ENCODE measurements at regions of chr9 and their contacts with region 1.

Region 1: DNA sequence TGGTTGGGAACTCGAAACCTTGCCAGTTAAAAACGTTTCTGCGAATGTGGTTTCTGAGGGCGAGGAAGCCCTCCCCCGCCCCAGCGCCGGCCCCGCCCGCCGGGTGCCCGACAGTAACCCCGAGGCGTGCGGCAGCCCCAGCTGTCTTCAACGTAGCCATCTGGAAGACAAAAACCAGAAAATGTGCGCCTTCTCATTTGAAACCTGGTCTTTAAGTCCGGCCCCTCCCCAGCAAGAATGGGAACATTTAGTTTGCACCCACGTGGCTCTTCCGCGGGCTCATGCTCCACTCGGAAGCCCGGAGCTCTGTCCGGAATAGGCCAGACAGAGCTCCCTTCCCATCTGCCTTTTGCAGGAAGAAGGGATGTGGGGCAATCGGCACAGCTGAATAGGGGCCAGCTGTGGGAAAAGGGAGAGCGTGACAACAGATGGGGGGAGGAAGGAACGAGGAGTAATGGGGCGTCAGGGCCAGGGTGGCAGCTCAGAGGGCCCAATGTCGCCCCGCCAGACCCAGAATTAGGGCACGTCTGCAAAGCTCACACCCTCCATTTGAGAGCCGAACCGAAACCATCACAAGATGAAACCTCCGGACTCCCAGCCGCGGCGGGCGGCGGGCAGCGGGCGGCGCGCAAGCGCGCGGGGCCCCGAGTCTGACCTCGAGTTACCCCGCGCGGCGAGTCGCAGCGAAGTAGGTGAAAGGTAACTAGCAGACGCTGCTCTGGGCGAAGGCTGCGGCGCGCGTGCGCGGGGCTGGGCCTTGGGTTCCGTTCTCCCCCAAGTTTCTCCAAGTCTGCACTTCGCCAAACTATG is 63.4 kb upstream of the ABCA1 start:
- DNase-seq: peak; percentile 79 to 92 (median 86)
- ATAC-seq: peak; percentile 88
- H3K4me3 ChIP-seq: peak overlapping the region; percentile 80
- H3K4me3 Mint-ChIP-seq: peak overlapping the region; percentile 89 to 94 (median 92)
- H3K27ac ChIP-seq: peak overlapping the region; percentile 92
- H3K27ac Mint-ChIP-seq: peak overlapping the region; percentile 68 to 98 (median 92)
- H3K4me1 ChIP-seq: peaks cover 15 to 32% of the 10 kb centered on the region in 2 donors
- H3K4me1 Mint-ChIP-seq: peaks cover 26 to 45% (median 39%) of the 10 kb centered on the region in 7 donors
- H3K27me3 ChIP-seq: no peaks in the 10 kb centered on the region
- H3K27me3 Mint-ChIP-seq: peaks cover 0 to 63% (median 0%) of the 10 kb centered on the region in 5 donors

Region 2: DNA sequence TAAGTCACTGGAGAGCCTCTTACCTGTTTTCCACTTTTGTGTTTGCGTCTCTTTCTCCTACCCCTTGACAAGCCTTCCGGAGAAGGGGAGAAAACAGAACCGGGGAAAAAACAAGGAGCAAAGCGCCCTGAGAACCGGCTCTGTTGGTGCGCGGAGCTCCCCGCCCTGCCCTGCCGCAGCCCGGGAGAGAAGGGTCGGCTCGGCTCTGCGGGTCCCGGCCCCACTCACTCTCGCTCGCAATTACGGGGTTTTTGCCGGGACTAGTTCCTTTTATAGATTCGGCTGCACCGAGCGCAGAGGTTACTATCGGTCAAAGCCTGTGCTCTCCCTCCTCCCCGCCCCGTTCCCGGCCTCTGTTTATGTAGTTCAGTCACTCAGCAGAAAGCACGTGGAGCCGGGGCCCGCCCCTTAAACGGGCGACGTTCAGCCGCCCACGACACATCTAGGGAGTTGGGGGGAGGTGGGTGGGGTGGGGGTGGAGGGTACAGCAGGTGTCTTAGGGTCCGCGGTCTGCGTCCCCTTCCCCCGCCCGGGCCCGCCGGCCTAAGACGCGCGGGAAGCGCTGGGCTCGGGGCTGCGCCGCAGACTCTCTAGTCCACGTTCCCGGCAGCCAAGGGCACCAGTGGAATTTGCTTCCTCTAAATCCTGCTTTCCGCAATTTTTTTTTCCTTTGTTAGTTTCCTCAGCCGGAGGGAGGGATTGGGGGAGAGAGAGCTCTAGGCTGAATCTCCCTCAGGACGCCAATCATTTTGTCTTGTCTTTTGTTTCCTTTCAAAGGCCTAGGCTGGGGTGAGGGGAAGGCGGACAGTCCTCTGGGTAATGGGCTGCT is 63.2 kb before region 1 on chr9 and contains the start of gene ABCA1:
- CTCF ChIA-PET with region 1: no interaction called
- POLR2A ChIA-PET with region 1: no interaction called
- intact Hi-C with region 1: loop called (anchors 1 kb)
- DNase-seq: peak; percentile 55 to 82 (median 73)
- ATAC-seq: peak; percentile 83
- H3K4me3 ChIP-seq: peak within 1 kb of the TSS; percentile 84
- H3K4me3 Mint-ChIP-seq: peak within 1 kb of the TSS; percentile 88 to 97 (median 96)
- H3K27ac ChIP-seq: peak within 1 kb of the TSS; percentile 70
- H3K27ac Mint-ChIP-seq: peak within 1 kb of the TSS in 8 of 9 donors; percentile 54 to 95 (median 72)
- H3K4me1 ChIP-seq: peaks cover 7 to 9% of the 10 kb centered on the region in 2 donors
- H3K4me1 Mint-ChIP-seq: peaks cover 19 to 41% (median 25%) of the 10 kb centered on the region in 7 donors
- H3K27me3 ChIP-seq: no peaks in the 10 kb centered on the region
- H3K27me3 Mint-ChIP-seq: peaks cover 0 to 51% (median 0%) of the 10 kb centered on the region in 5 donors
- total RNA-seq, gene ABCA1: 0.58 to 19.4 (median 1.1) TPM

Region 3: DNA sequence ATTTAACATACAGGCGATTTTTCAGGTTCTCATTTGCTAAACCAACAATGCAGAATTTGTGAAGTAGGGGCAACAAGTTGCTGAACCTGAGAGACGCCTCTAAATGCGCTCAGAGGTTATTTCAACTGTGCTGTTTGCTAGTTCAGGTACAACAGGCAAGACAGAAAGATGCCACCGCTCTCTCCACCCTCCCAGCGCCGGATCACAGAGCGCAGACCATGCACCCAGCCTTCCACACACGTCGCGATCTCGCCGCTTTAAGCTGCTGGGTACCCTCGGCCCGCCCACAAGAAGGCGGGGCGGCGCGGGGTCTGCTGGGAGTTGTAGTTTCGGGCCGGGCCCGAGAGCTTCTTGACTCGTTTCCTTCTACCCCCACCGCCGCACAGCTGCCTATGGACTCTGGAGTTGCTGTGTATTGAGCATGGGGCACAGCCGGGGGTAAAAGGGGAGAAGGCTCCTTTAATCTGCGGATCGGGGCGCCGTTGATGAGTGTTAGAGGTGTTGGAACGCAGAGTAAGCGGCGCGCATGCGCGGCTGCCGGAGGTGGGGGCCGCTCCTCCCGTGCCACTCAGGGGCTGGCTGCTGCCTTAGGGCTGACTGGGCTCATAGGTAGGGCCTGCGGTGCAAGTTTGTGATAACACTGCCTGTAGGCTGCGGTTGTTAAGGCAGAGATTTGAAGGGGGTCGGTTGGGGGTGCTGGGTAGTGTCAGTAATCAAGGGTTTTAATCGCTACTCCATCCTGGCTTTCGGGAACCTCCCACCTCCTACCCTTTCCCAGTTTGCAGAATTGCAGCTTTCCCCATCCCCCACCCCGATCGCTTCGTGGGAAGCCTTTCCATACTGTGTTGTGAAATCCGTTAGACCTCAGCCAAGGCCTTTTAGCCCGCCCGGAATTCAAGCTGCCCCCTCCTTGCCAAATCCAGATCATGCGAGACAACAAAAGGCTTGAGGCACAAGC is 23.0 kb before region 1 on chr9:
- CTCF ChIA-PET with region 1: interaction called, 3 read pairs
- POLR2A ChIA-PET with region 1: interaction called, 3 read pairs
- intact Hi-C with region 1: loop called (anchors 1 kb)
- DNase-seq: peak; percentile 80 to 95 (median 91)
- ATAC-seq: peak; percentile 99
- H3K4me3 ChIP-seq: peak overlapping the region; percentile 85
- H3K4me3 Mint-ChIP-seq: peak overlapping the region; percentile 82 to 96 (median 94)
- H3K27ac ChIP-seq: peak overlapping the region; percentile 69
- H3K27ac Mint-ChIP-seq: peak overlapping the region; percentile 64 to 92 (median 86)
- H3K4me1 ChIP-seq: peaks cover 0 to 6% of the 10 kb centered on the region in 2 donors
- H3K4me1 Mint-ChIP-seq: peaks cover 12 to 25% (median 17%) of the 10 kb centered on the region in 7 donors
- H3K27me3 ChIP-seq: peaks cover 0 to 4% of the 10 kb centered on the region in 2 donors
- H3K27me3 Mint-ChIP-seq: peaks cover 0 to 30% (median 0%) of the 10 kb centered on the region in 5 donors

Region 4: DNA sequence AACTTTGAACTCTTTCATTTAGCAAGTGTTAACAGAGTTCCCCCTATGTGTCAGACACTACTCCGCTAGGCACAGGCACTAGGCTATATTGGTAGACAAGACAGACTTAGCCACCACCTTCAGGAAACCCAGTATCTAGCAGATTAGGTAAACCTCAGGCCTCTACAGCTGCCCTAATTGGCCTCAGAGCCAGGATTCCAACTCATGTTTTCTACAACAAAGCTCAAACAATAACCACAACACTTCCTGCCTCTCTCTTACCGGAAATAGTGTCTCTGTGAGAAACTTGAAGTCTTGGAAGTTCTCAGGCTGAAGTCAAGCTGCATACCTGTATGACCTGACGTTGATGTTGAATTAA is 136.5 kb after region 1 on chr9:
- CTCF ChIA-PET with region 1: no interaction called
- POLR2A ChIA-PET with region 1: no interaction called
- intact Hi-C with region 1: loop called (anchors 1 kb)
- DNase-seq: peak in 8 of 9 donors; percentile 41 to 92 (median 90)
- ATAC-seq: peak; percentile 99
- H3K4me3 ChIP-seq: no peak overlapping the region
- H3K4me3 Mint-ChIP-seq: peak overlapping the region; percentile 35 to 84 (median 74)
- H3K27ac ChIP-seq: no peak overlapping the region
- H3K27ac Mint-ChIP-seq: peak overlapping the region; percentile 42 to 95 (median 78)
- H3K4me1 ChIP-seq: peaks cover 31 to 55% of the 10 kb centered on the region in 2 donors
- H3K4me1 Mint-ChIP-seq: peaks cover 36 to 67% (median 63%) of the 10 kb centered on the region in 7 donors
- H3K27me3 ChIP-seq: no peaks in the 10 kb centered on the region
- H3K27me3 Mint-ChIP-seq: peaks cover 0 to 35% (median 0%) of the 10 kb centered on the region in 5 donors

Region 5: DNA sequence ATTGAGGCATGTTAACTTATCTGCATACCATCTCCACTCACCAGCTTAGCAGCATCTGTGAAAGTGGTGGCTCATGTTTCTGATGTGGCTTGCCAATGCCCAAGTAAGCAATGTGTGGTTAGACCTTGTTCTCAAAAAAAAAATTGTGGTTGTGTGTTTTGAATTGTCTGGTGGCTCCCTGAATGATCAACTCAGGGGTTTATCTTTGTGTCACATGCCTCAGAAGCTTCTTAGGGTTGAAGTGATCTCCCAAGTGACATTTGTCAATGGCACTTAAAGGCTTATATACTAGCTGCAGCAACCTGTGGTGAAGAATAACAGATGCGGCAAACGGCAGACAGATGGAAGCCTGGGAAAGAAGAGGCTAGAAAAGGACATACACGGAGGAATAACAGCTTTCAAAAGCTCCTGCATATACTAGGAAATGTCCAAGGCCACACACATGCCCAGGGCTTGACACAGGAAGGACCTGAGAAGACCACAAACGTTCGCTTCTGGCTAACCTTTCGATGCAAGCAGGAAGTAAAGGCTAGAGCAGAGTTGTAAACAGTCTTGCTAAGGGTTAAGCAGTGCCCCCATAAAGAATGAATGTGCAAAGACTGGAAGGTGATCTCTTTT is 414.3 kb after region 1 on chr9:
- CTCF ChIA-PET with region 1: no interaction called
- POLR2A ChIA-PET with region 1: no interaction called
- intact Hi-C with region 1: loop called (anchors 1 kb)
- DNase-seq: peak in 8 of 9 donors; percentile 61 to 92 (median 90)
- ATAC-seq: peak; percentile 94
- H3K4me3 ChIP-seq: peak overlapping the region; percentile 1
- H3K4me3 Mint-ChIP-seq: peak overlapping the region in 9 of 10 donors; percentile 63 to 84 (median 75)
- H3K27ac ChIP-seq: no peak overlapping the region
- H3K27ac Mint-ChIP-seq: peak overlapping the region in 8 of 9 donors; percentile 11 to 96 (median 90)
- H3K4me1 ChIP-seq: peaks cover 19 to 22% of the 10 kb centered on the region in 2 donors
- H3K4me1 Mint-ChIP-seq: peaks cover 20 to 42% (median 34%) of the 10 kb centered on the region in 7 donors
- H3K27me3 ChIP-seq: peaks cover 0 to 6% of the 10 kb centered on the region in 2 donors
- H3K27me3 Mint-ChIP-seq: peaks cover 34 to 82% (median 59%) of the 10 kb centered on the region in 5 donors